ENCODE measurements at regions of chr5 and their contacts with region 1.

Region 1: DNA sequence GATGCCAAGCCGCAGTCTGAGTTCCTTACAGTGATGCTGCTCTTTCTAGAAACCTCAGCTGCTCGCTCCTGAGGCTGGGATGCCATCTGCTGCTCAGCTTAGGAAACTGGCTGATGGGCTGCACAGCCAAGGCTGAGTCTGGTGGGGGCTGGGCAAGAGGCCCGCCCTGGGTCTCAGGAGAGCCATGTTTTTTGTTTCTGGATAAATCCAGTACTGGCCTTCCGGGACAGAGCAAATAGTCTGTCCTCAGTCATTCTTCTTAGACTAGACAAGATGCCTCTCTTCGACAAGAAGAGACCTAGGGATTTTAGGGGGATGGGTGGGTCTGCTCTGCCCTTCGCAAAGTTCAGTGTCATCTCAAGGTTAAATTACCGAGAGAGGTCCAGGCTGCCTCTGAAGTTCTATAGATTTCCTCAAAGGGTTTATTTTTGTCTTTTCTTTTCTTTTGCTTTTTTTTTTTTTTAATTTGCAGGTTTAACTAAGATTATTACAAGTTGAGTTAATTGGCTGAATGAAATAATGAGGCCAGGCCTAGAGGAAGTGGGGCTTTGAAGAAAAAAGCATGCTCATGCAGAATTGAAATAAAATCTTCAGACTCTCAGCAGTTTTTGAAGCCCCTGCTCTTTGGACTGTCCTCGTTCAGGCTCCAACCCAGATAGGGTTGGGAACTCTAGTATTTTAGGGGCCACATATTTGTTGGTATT is 30.6 kb upstream of the MATR3 start:
- DNase-seq: peak; percentile 91
- ATAC-seq: peak; percentile 99

Region 2: GRCh38 chr5:138252944-138253343 is 1010.0 kb before region 1 on chr5:
- intact Hi-C with region 1: no loop called
- DNase-seq: no peak
- ATAC-seq: no peak

Region 3: GRCh38 chr5:138583984-138584637 is 678.8 kb before region 1 on chr5:
- intact Hi-C with region 1: loop called (anchors 10 kb)
- DNase-seq: no peak
- ATAC-seq: no peak

Region 4: GRCh38 chr5:138641547-138642298 is 621.2 kb before region 1 on chr5:
- intact Hi-C with region 1: loop called (anchors 2 kb)
- DNase-seq: peak; percentile 88
- ATAC-seq: peak; percentile 64

Region 5: DNA sequence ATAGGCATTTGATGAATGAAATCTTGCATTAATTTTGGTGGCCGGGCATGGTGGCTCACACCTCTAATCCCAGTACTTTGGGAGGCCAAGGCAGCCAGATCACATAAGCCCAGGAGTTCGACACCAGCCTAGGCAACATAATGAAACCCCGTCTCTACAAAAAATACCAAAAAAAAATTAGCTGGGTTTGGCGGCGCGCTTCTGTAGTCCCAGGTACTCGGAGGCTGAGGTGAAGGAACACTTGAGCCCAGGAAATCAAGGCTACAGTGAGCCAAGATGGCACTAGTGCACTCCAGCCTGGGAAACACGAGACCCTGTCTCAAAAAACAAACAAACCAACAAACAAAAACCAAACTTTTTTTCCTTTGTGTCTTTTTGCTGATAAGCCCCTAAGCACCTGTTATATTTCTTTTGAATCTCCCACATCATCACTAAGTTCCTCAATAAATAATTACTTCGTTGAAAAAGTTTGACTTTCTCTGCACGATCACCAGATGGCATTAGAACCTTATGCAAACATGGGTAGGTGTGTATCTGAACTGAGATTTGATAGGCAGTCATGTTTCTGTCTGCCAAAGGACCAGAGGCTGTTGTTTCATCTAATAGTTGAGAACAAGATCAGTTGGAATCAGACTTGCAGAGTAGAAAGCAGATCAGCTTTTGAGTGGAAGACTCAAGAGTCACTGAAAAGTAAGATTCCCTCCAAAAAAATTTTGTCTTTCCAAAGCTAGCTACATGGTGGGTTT is 25.2 kb after region 1 on chr5:
- intact Hi-C with region 1: no loop called
- DNase-seq: no peak
- ATAC-seq: no peak

Measured in sciatic nerve (tissue), 2 donors.